ENCODE measurements at regions of chr6 and their contacts with region 1.

Region 1: DNA sequence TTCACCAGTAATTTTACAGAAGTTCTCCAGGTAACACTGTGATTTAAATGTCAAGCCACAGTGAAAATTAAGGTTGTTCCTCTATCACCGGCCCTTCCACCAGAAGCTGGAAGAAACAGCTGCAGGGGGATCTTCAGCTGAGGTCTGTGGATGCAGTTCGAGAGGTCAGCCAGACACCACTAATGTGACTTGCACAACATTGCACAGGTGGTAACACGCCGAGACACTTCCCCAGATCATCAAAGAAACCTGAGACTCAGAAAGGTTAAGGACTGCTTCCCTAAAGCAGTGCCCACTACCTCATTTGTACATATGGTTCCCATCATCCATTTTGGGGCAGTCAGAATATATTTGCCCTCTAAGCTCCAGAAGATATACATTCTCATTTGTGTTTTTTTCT is 8.1 kb upstream of the SERPINB9 start:
- DNase-seq: no peak
- ATAC-seq: no peak
- H3K4me3 ChIP-seq: no peak overlapping the region
- H3K27ac ChIP-seq: no peak overlapping the region
- H3K4me1 ChIP-seq: peaks cover 5 to 6% of the 10 kb centered on the region in 2 experiments; a peak in 4 of 5 replicates
- H3K27me3 ChIP-seq: no peaks in the 10 kb centered on the region
- CTCF ChIP-seq: no peak
- EP300 ChIP-seq: no peak
- POLR2A ChIP-seq: no peak
- RAD21 ChIP-seq: no peak

Region 2: DNA sequence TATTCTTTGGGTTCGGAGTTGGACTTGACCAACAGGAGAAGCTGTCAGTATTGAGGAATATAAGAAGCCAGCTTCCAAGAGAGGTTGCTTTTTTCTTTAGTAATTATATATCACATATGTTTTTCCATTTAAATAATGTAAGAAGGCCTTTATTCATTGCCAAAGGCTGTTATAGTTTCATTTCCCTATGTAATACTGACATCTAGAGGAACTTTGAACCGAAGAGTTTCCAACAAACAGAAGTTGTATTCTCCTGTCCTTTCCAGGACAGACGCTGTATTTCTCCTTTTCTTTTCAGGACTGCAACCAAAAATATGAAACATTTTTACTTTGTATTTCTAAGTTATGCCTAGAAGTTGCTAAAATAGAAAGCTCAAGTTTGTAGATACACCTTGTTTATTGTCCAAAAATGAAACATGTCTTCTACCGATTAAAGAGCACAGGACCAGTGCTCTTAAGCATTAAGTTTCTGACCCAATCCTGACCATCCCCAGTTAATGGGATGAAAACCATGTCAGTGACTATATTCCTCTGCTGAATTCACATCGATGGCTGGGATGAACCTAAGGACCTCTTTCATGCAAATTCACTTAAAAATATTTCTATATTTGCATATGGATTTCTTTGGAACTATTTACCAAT is 215.6 kb before region 1 on chr6:
- CTCF ChIA-PET with region 1: no interaction called
- POLR2A ChIA-PET with region 1: no interaction called
- in situ Hi-C with region 1: no loop called
- intact Hi-C with region 1: no loop called
- DNase-seq: peak in 1 of 4 experiments; percentile 30
- ATAC-seq: peak; percentile 72; the same call in 2 of the 3 replicates
- H3K4me3 ChIP-seq: no peak overlapping the region
- H3K27ac ChIP-seq: no peak overlapping the region
- H3K4me1 ChIP-seq: no peaks in the 10 kb centered on the region
- H3K27me3 ChIP-seq: peaks cover 51 to 59% of the 10 kb centered on the region in 2 experiments
- CTCF ChIP-seq: peak; percentile 17 to 62 (median 48); a peak in 4 of 6 replicates
- EP300 ChIP-seq: no peak
- POLR2A ChIP-seq: no peak
- RAD21 ChIP-seq: peak; percentile 83 to 84

Region 3: DNA sequence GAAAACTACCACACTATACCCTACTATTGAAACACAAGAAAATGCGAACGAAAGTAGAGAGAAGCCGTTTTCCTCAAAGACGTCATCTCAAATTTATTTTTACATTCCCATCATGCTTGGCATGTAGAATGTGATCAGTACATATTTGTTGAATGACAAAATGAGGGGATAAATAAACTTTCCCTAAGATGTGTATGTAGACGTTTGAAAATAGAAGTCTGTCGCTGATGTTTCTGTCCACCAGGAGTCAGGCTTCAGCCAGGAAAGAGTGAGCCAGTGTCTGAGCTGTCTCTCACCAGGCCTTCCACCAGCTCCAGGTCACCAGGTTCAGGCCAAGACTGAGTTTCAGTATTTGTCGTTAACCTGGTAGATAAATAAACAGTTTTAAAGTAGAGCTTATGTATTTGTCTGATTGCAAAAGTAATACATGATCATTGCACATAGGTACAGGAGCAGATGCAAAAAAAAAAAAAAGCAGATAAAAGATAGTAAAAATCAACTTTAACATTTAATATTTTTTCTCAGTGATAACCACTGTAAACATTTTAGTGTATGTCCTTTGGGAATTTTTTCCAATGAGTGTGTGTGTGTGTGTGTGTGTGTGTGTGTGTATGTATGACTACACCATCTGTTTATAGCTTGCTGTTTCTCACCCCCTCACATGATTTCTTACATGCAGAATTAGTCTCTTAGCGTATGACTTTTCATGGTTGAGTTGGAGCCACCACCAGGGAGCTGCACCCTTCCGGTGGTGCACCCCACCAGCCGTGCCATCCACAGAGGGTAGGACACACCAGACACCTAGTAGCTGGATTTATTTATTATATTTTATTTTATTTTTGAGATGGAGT is 119.8 kb before region 1 on chr6:
- CTCF ChIA-PET with region 1: interaction called, 13 read pairs
- POLR2A ChIA-PET with region 1: no interaction called
- in situ Hi-C with region 1: no loop called
- intact Hi-C with region 1: loop called (anchors 5 kb)
- DNase-seq: peak; percentile 74 to 88 (median 81)
- ATAC-seq: peak; percentile 97
- H3K4me3 ChIP-seq: no peak overlapping the region
- H3K27ac ChIP-seq: no peak overlapping the region
- H3K4me1 ChIP-seq: peaks cover 2 to 3% of the 10 kb centered on the region in 2 experiments; a peak in 3 of 5 replicates
- H3K27me3 ChIP-seq: no peaks in the 10 kb centered on the region
- CTCF ChIP-seq: peak; percentile 89 to 98 (median 97)
- EP300 ChIP-seq: no peak
- POLR2A ChIP-seq: no peak
- RAD21 ChIP-seq: peak; percentile 97 to 99

Region 4: DNA sequence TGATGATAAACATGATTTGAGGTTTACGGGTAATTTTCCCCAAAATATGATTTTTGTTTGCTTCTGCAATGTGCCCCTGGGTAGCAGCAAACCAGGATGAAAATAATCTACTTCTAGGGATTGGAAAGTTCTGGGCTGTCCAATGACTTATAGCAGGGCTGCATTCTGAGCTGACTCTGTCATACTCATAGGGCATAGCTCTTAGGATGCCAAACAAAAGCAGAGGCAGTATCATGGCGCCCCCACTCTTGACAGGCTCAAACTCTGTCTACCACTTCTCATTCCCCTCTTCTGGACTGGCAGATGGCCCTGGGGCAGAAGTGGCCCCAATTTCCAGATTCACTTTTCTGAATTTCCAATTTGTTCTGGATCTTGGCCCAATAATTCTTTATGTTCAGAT is 79.8 kb before region 1 on chr6:
- CTCF ChIA-PET with region 1: no interaction called
- POLR2A ChIA-PET with region 1: no interaction called
- in situ Hi-C with region 1: no loop called
- intact Hi-C with region 1: no loop called
- DNase-seq: no peak
- ATAC-seq: peak; percentile 66
- H3K4me3 ChIP-seq: no peak overlapping the region
- H3K27ac ChIP-seq: no peak overlapping the region
- H3K4me1 ChIP-seq: no peaks in the 10 kb centered on the region
- H3K27me3 ChIP-seq: no peaks in the 10 kb centered on the region
- CTCF ChIP-seq: no peak
- EP300 ChIP-seq: no peak
- POLR2A ChIP-seq: no peak
- RAD21 ChIP-seq: no peak